ENCODE measurements at regions of chr5 and their contacts with region 1.

Region 1: DNA sequence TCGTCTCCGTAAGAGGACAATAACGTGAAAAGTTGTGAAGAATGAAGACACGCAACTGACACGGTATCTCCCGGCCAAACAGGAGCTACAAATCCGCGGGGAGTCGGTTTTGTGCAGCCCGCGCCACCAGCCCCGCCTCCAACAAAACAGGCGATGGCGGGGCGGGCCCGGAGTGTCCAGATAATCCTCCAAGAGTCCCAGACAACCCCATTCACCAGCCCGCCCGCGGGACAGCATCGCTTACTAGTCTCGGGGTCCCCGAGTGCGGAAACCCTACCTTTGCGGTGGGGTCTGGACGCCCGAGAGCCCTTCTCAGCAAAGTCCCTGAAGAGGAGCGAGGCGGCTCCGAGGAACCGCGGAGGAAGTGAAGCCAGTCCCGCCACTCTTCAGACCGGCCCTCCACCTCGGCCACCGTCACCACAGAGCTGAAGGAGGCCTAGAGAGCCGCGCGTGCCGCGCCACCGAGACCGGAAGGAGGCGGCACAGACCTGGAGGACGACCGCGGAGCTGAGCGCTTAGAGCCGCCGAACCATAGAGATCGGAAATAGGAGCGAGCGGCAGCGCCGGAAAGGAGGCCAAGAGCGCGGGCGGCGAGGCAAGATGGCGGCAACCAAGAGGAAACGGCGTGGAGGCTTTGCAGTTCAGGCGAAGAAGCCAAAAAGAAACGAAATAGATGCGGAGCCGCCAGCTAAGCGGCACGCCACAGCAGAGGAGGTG is at the starts of genes BRIX1 and RAD1:
- DNase-seq: peak; percentile 86 to 95 (median 92)
- ATAC-seq: peak; percentile 99
- H3K4me3 ChIP-seq: peak within 1 kb of the TSS; percentile 99
- H3K4me3 Mint-ChIP-seq: peak within 1 kb of the TSS in 3 of 10 donors; percentile 56 to 80 (median 60)
- H3K27ac ChIP-seq: peak within 1 kb of the TSS; percentile 84
- H3K27ac Mint-ChIP-seq: peak within 1 kb of the TSS in 2 of 9 donors; percentile 59 to 69
- H3K4me1 ChIP-seq: peaks cover 19 to 34% of the 10 kb centered on the region in 2 donors
- H3K4me1 Mint-ChIP-seq: peaks cover 17 to 41% (median 35%) of the 10 kb centered on the region in 7 donors
- H3K27me3 ChIP-seq: no peaks in the 10 kb centered on the region
- H3K27me3 Mint-ChIP-seq: no peaks in the 10 kb centered on the region
- total RNA-seq, gene BRIX1: 13.4 to 45.2 (median 26.8) TPM
- total RNA-seq, gene RAD1: 19.3 to 29.6 (median 24.6) TPM

Region 2: DNA sequence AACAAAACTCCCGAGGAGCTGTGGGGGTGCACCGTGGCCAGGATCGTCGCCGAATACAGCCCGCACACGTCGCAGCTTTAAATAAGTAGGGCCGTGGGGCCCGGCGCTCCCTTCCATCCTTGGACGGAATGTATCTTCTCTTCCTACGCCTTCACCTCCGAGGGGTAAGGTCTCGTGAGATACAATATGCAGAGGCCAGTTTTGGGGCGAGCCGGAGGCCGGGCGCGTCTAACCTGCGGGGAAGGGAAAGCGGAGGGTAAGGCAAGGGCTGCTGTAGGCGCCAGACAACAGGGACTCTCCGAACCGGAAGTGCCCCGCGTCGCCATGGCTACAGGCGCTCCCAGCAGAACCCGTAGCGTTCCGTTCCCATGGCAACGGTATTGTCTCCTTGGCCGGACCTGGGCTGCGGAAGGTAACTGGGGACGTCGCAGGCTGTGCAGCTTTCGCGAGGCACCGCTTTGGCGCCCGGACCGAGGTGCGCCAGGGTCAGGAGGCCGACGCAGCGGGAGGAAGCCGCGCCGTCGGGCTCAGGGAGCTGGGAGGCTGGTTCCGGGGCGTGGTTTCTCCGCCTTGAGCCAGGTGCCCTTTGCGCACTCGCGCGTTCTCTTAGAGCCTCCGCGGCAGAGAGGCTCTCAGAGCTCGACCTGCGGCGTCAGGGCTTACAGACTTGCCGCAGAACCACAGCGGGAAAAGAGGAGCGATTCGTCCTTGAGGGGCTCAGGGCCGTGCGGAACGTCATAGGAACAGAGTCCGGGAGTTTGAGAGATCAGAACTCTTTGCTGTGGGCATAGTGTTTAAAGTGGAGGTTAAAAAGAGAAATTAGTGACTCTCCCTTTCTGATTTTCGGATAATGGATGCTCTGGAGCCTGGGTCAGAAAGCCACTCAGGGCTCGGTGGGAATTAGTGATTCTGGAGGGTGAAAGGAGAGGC is 76.2 kb before region 1 on chr5 and contains the start of gene TTC23L:
- CTCF ChIA-PET with region 1: no interaction called
- POLR2A ChIA-PET with region 1: interaction called, 16 read pairs
- intact Hi-C with region 1: loop called (anchors 1 kb)
- DNase-seq: peak; percentile 82 to 95 (median 90)
- ATAC-seq: peak; percentile 94
- H3K4me3 ChIP-seq: peak within 1 kb of the TSS; percentile 85
- H3K4me3 Mint-ChIP-seq: peak within 1 kb of the TSS; percentile 79 to 97 (median 92)
- H3K27ac ChIP-seq: peak within 1 kb of the TSS; percentile 78
- H3K27ac Mint-ChIP-seq: peak within 1 kb of the TSS; percentile 83 to 99 (median 94)
- H3K4me1 ChIP-seq: peaks cover 0 to 4% of the 10 kb centered on the region in 2 donors
- H3K4me1 Mint-ChIP-seq: peaks cover 6 to 16% (median 10%) of the 10 kb centered on the region in 7 donors
- H3K27me3 ChIP-seq: no peaks in the 10 kb centered on the region
- H3K27me3 Mint-ChIP-seq: peaks cover 0 to 9% (median 0%) of the 10 kb centered on the region in 5 donors
- total RNA-seq, gene TTC23L: 0.57 to 1.9 (median 1.00) TPM in 3 of 5 experiments, not detected in the others

Region 3: GRCh38 chr5:35308421-35308820 is 393.1 kb after region 1 on chr5:
- CTCF ChIA-PET with region 1: no interaction called
- POLR2A ChIA-PET with region 1: no interaction called
- intact Hi-C with region 1: no loop called
- DNase-seq: no peak
- ATAC-seq: no peak
- H3K4me3 ChIP-seq: no peak overlapping the region
- H3K4me3 Mint-ChIP-seq: no peak overlapping the region
- H3K27ac ChIP-seq: no peak overlapping the region
- H3K27ac Mint-ChIP-seq: no peak overlapping the region
- H3K4me1 ChIP-seq: no peaks in the 10 kb centered on the region
- H3K4me1 Mint-ChIP-seq: no peaks in the 10 kb centered on the region
- H3K27me3 ChIP-seq: no peaks in the 10 kb centered on the region
- H3K27me3 Mint-ChIP-seq: peaks cover 2 to 36% (median 7%) of the 10 kb centered on the region in 5 donors

Region 4: DNA sequence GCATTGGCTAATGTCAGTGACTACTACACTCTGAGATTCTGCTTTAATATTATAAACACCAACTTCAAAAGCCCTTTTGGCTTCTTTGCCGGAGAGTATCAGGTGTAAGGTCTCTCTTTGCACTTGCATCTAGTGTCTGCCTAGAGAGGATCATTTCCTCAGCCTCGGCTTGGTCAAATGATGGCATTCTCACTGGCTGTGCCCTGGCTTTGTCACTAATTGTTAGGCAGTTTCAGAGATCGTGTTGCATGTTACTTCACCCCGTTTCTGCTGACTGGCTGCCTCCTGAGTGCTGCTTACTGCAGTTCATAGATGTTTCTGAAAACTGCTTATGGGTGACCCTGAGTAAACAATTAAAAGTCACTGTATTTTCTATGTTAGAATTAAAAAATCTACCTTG is 1739.9 kb after region 1 on chr5:
- CTCF ChIA-PET with region 1: no interaction called
- POLR2A ChIA-PET with region 1: no interaction called
- intact Hi-C with region 1: no loop called
- DNase-seq: no peak
- ATAC-seq: peak; percentile 56
- H3K4me3 ChIP-seq: no peak overlapping the region
- H3K4me3 Mint-ChIP-seq: no peak overlapping the region
- H3K27ac ChIP-seq: no peak overlapping the region
- H3K27ac Mint-ChIP-seq: no peak overlapping the region
- H3K4me1 ChIP-seq: no peaks in the 10 kb centered on the region
- H3K4me1 Mint-ChIP-seq: peaks cover 0 to 1% (median 0%) of the 10 kb centered on the region in 7 donors
- H3K27me3 ChIP-seq: no peaks in the 10 kb centered on the region
- H3K27me3 Mint-ChIP-seq: peaks cover 14 to 35% (median 28%) of the 10 kb centered on the region in 5 donors

Measured in naive thymus-derived CD4-positive, alpha-beta T cell (primary cell).